AG04449 (cell line): ENCODE measurements at regions of chr12 and their contacts with region 1.

Region 1: DNA sequence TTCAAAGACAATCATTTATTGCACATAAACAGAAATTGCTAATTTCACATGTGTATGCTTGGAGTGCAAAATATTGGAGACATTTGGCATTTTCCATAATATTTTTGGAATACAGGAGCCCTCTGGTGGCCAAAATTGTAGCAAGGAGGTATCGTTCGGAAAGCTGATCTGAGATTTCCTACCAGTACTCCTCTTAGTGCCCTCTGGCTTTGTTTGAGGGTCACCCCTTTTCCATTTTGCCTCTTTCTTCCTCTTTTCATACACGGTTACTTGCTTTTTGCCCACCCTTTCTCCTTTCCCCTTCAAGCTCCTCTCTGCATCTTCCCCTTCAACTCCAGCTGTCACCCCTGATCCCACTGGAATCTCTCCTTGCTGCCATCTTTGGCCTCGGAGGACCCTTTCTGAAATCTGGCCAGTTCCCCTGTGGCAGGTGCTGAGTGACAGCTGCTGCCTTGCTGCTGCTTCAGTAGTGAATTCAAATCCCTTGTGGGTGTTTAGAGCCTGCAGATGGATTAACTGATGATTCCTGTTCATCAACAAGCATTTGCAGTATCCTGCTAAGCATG is 164.6 kb upstream of the PARP11 start:
- DNase-seq: no peak
- H3K4me3 ChIP-seq: no peak overlapping the region
- CTCF ChIP-seq: peak; percentile 46

Region 2: GRCh38 chr12:3743803-3744202 is 294.0 kb before region 1 on chr12:
- CTCF ChIA-PET with region 1: no interaction called
- POLR2A ChIA-PET with region 1: no interaction called
- DNase-seq: no peak
- H3K4me3 ChIP-seq: no peak overlapping the region
- CTCF ChIP-seq: no peak

Region 3: DNA sequence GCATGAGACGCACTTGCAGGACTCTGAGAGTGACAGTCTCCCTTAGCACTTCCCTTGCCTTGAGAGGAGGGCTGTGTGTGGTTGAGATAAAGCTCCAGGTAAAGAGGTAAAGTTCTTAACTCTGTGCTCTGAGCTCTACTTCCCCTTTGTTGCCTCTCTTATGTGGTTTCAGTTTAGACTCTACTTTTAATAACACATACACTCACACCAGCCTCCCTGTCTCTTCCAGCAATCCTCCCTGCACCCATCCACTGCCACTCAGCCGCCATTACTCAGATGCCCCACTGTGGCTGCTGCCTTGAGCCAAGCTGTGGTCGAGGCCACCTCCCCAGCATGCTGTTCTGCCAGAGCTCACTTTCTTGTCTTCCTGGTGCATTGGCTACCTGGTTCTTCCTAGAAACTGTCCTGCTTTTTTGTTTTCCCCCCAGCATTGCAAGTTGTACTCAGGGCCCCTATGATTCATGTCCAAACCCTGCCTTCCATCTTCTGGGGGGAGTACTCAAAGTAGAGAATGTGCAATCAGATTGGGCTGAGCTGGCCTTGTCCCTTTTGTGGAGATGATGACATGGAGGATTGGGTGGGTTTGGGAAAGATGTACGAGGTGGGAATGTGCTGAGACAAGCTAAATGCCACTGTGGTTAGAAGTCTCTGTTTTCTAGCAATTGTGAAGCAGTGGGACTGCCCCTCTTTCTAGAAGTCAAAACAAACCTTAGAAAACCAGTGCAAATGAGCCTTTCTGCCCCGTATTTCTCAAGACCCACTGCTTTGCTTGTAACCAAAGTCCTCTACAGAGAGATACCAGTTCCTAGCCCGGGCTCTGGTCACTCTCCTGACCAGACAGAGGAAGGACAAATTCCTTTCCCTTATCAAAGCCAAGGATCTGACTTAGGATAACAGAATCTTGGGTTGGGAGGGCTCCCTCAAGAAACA is 49.0 kb before region 1 on chr12:
- CTCF ChIA-PET with region 1: interaction called, 130 read pairs
- POLR2A ChIA-PET with region 1: no interaction called
- DNase-seq: no peak
- H3K4me3 ChIP-seq: no peak overlapping the region
- CTCF ChIP-seq: no peak

Region 4: DNA sequence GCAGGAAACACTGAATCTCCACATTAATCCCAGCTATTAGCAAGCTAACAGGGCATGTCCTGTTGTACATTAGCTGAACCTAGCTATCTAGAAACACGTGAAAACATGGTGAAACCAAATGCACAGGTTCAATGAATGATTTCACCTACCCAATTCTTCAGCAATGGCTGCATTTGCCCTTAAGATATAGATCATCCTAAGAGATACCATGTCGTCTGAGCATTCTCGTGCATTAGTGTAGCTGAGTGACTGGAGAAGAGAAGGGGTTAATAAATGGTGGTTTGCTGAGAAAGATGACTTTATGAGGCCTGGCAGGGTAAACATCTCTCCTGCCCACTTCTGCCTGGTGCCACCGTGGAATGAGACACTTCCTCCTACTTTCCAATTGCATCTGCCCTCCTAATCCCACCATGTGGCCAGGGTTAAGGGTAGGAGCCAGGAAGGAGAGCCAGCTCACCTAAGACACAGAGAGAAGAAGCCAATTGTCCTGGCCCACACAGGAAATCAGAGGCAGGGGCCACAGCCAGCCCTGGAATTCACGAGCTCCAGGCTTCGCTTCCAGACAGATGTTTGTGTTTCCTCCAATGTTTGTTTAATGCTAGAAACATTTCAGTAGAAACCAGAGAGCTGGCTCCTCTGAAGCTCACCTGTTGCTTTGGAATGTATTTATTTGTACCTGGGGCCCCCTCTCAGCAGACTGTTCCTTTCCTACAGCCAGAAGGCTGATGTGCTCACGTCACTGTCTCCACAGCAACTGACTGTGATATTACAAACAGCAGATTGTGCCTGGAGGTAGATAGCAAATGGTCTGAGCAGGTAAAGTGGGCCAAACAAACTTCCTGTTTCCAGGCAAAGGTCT is 38.6 kb before region 1 on chr12:
- CTCF ChIA-PET with region 1: interaction called, 130 read pairs
- POLR2A ChIA-PET with region 1: no interaction called
- DNase-seq: no peak
- H3K4me3 ChIP-seq: no peak overlapping the region
- CTCF ChIP-seq: no peak